ENCODE measurements at regions of chr2 and their contacts with region 1.

Region 1: GRCh38 chr2:25951071-25951547 is 31.2 kb downstream of the KIF3C start:
- DNase-seq: peak; percentile 78 to 85
- ATAC-seq: peak; percentile 98

Region 2: GRCh38 chr2:25851740-25852503 is 99.2 kb before region 1 on chr2:
- intact Hi-C with region 1: loop called in 1 of 2 experiments (anchors 10 kb)
- DNase-seq: no peak
- ATAC-seq: peak; percentile 95

Region 3: DNA sequence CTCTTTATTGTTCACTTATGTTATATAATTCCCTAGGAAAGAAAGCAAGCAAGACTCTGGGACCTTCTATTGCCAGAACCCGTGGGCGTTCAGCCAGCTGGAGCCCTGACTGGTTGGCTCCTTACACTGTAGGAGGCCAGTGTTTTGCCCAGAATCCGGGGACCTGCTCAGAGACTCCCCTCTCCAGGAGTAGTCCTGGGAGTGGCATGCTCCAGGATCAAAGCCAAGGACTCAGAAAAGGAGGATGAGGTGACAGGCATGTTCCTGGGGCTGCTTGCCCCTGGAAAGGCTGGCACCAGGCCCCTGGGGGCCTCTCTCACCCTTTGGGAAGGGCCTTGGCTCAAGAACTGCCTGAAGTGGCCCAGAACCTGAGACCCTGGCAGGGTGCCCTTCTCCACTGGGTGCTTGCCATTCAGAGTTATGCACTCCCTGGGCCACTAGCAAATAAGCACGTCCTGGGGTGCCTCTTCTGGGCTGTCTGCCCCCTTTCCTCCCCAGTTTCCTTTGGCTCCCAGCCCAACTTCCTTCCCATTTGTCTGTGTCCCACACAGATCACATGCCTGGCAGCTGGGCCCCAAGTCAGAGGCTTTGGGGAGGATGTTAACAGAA is 50.7 kb after region 1 on chr2:
- intact Hi-C with region 1: no loop called
- DNase-seq: peak; percentile 52 to 62
- ATAC-seq: no peak

Measured in left colon (tissue), 2 donors.